ENCODE measurements at regions of chr3 and their contacts with region 1.

Region 1: GRCh38 chr3:98732286-98733052 is 30.7 kb upstream of the ST3GAL6 start:
- DNase-seq: peak; percentile 78
- ATAC-seq: peak; percentile 79

Region 2: DNA sequence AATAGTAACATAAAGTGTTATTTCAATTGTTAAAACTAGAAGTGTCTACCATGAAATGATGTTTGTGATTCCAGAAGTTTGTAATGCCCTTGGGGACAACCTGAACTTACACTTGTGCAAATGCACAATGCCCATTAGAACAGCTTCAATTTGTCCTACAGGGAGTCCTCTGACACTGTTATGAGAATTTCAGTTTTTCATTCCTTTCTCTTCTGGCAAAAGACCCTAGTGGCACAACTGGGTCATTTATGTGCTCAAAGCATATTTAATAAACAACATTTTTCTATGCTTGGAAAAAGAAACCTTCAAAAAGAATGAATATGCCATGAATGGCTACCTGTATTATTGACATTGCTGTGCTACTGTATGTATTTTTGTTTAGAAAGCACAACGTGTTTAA is 602.0 kb before region 1 on chr3 and contains the start of gene OR5H1:
- intact Hi-C with region 1: no loop called
- DNase-seq: no peak
- ATAC-seq: no peak
- total RNA-seq, gene OR5H1: not detected

Region 3: DNA sequence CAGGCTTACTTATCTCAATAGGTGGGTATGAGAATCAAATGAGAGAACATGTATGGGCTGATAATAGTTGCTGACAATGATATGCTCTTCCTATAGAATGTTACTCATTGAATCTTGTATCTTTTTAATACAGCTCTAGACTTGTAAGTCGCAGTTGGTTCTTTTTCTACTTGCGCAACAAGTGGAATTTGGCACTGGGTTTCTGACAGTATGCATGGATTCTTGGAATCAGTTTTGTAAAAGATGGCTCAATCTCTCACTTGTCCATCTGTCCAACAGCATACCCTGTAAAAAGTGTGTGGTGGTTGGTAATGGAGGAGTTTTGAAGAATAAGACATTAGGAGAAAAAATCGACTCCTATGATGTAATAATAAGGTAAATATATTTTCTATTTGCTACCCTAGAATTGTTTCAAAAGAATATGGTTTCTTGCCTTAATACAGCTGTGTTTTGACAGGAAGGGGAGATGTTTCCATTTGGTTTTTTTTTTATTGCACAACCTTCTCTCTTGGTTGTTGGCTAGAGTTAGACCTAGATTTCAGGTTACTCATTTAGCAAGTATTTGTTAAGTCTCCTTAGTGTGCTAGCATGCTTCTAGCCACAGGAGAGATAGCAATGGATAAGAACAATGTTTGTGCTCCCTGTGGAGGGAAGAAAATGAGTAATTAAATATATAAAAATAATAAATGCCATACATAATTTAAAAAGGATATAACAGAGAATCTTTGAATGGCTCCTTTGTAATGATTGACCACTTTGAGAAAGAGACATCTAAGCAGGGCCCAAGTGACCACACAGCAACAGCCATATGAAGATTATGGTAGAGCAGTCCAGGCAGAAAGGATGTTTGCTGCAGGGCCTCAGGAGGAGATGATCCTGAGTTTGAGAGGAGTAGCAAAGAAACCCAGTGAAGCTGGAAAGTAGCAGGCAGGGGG is 52.5 kb after region 1 on chr3:
- intact Hi-C with region 1: loop called (anchors 10 kb)
- DNase-seq: no peak
- ATAC-seq: peak; percentile 73

Region 4: DNA sequence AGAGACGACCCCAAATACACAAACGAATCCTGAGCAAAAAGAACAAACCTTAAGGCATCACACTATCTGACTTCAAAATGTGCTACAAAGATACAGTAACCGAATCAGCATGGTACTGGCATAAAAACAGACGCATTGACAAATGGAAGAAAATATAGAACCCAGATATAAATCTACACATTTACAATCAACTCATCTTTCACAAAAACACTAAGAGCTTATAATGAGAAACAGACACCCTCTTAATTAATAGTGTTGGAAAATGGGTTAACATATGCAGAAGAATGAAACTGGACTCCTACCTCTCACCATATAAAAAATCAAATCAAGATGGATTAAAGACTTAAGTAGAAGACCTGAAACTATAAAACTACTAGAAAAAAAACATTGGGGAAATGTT is 299.3 kb after region 1 on chr3:
- intact Hi-C with region 1: no loop called
- DNase-seq: no peak
- ATAC-seq: no peak